ENCODE measurements at regions of chr4 and their contacts with region 1.

Region 1: DNA sequence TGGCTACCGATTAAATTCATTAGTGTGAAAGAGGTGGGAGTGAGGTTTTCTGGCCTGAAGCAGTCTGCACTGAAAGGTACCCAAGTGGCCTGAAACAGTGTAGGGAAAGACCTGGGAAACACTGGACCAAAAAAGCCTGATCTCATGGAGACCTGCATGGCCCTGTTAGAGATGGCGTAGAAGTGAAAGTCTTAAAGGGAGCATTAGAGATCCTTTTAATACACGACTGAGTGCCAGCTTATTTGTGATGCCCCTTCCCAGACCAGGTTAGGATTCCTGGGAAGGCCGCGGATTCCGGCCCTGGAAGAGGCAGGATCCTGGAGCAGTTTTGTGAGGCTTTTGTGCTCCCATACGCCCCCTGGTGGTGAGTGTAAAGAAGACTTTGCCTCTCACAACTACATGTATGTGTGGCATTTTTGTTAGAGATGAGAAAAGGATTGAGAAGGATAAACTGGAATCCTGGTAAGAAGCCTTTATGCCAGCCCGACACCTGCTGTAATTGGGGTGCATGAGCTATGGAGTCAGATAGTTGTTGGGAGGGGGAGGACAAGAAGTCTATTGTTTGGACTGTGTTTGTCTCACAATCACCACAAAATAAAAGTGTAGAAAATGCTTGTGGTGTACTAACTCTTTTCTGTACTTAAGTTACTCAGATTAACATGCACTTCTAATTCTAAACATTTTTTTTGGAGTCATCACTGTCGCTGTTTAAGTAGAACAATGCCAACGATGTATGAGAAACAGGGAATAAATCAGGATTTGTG is 54.0 kb downstream of the JADE1 start:
- DNase-seq: peak; percentile 85 to 91
- ATAC-seq: peak; percentile 87
- H3K4me3 ChIP-seq: no peak overlapping the region
- H3K27ac ChIP-seq: peak overlapping the region in 1 of 2 donors; percentile 29
- H3K4me1 ChIP-seq: no peaks in the 10 kb centered on the region
- H3K27me3 ChIP-seq: no peaks in the 10 kb centered on the region

Region 2: GRCh38 chr4:128191115-128191781 is 672.2 kb before region 1 on chr4:
- intact Hi-C with region 1: loop called (anchors 5 kb)
- DNase-seq: peak; percentile 69 to 79
- ATAC-seq: peak; percentile 91
- H3K4me3 ChIP-seq: no peak overlapping the region
- H3K27ac ChIP-seq: no peak overlapping the region
- H3K4me1 ChIP-seq: no peaks in the 10 kb centered on the region
- H3K27me3 ChIP-seq: no peaks in the 10 kb centered on the region

Region 3: DNA sequence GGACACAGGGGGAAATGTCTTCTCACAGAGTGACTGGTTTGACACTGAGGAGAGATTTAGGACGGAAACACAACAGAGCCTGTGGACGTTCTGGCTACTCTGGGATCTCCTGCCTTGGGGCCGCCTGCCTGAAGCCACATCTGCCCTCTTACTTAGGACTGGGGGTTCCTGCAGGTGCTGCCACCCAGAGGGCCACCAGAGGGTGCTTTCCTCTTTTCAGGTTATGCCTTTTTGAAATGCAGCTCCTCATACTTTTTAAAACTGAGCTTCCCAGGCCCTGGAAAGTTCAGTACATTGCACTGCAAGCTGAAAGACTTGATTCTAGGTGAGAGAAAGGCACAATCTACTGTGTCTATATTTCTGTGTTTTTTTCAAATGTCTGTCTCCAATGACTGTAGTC is 483.6 kb before region 1 on chr4:
- intact Hi-C with region 1: loop called in 1 of 2 experiments (anchors 5 kb)
- DNase-seq: peak in 1 of 2 donors; percentile 57
- ATAC-seq: no peak
- H3K4me3 ChIP-seq: no peak overlapping the region
- H3K27ac ChIP-seq: no peak overlapping the region
- H3K4me1 ChIP-seq: peaks cover 0 to 1% of the 10 kb centered on the region in 2 donors
- H3K27me3 ChIP-seq: no peaks in the 10 kb centered on the region

Region 4: DNA sequence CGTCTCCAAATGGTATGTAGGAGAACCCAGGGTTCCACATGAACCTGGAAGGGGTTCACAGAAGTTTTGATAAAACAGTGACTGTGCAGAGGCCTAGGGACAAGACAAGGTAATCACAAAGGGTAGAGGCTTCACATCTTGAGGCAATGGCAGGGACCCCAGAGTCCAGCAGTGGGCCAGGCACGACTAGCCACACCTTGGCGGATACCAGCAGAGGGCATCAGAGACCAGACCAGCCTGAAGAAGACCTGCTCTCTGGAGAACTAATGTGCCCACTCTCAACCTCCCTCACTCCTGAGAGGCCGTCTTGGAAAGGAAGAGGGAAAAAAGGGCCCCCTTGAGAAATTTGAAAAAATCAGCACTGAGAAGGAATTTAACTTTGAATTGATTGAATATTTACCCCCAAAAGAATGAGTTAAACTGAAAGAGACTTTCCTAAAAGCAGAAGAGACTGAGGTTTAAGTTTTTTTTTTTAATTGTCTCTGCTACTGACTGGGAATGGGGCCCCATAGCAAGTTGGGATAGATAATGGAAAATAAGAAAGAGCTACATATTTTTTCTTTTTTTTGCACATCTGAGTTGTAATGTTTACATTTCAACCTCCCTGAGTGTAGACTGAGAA is 297.8 kb before region 1 on chr4:
- intact Hi-C with region 1: loop called (anchors 5 to 10 kb)
- DNase-seq: peak in 1 of 2 donors; percentile 50
- ATAC-seq: no peak
- H3K4me3 ChIP-seq: no peak overlapping the region
- H3K27ac ChIP-seq: no peak overlapping the region
- H3K4me1 ChIP-seq: peaks cover 2 to 4% of the 10 kb centered on the region in 2 donors
- H3K27me3 ChIP-seq: no peaks in the 10 kb centered on the region

Region 5: DNA sequence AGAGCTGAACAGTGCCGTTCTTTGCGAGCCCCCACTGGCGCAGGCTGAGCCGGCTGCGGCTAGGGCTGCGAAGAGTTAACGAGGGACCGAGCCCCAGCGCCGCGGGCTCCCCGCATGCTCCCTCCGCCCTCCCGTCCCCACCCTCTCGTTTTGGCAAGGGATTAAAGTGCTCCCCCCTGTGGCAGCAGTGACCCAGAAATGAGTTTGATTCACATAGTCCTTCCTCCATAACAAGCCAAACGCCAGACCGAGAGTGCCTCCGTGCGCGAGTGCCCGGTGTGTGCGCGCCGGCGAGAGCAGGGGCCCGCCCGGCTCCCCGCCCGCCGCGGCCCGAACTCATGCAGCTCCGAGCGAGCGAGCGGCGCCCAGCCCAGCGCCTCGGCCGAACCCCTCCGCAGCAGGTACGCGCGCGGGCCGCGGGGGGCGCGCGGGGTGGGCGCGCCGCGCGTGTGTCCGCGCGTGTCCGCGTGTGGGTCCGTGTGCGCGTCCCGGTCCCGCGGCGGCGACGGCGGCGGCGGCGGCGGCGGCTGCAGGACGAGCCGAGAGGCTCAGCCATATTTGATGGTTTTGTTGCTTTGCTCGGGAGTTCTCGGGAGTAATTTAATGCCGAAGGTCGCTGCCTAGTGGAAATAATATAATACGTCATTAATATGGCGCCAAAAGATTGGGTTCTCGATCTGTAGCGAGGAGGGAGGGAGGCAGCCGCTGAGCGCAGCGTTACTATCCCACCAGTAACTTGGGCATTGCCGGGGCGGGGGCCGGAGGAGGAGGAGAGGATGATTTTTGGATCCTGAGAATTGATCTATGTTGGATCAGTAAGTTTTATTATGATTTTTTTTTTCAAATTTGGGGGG is 53.8 kb before region 1 on chr4 and contains the start of gene JADE1:
- intact Hi-C with region 1: loop called (anchors 2 to 5 kb)
- DNase-seq: peak; percentile 93 to 94
- ATAC-seq: peak; percentile 87
- H3K4me3 ChIP-seq: peak within 1 kb of the TSS; percentile 64 to 72
- H3K27ac ChIP-seq: peak within 1 kb of the TSS; percentile 84 to 90
- H3K4me1 ChIP-seq: no peaks in the 10 kb centered on the region
- H3K27me3 ChIP-seq: no peaks in the 10 kb centered on the region
- total RNA-seq, gene JADE1: 32.2 to 32.8 TPM